Breast epithelium (tissue), 4 donors: ENCODE measurements at regions of chr7 and their contacts with region 1.

Region 1: DNA sequence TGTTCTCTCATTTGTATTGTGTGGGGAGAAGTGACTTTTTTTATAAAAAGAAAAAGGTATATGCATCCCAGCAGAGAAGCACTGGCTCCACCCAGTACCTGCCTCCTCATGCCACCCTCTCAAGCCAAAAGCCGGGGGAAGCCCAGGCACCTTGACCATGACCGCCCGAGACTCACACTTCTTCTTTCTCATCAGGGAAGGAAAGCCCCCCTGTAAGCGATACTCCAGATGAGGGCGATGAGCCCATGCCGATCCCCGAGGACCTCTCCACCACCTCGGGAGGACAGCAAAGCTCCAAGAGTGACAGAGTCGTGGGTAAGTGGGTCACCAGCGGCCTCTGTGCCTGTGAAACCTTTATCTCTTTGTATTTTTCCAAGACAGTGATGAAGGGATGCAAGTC is 22.9 kb downstream of the IKZF1 start:
- DNase-seq: no peak
- H3K4me3 ChIP-seq: no peak overlapping the region
- H3K27ac ChIP-seq: no peak overlapping the region
- H3K4me1 ChIP-seq: no peaks in the 10 kb centered on the region
- H3K27me3 ChIP-seq: no peaks in the 10 kb centered on the region
- CTCF ChIP-seq: no peak
- POLR2A ChIP-seq: no peak

Region 2: GRCh38 chr7:49433794-49434193 is 893.6 kb before region 1 on chr7:
- intact Hi-C with region 1: no loop called
- DNase-seq: no peak
- H3K4me3 ChIP-seq: no peak overlapping the region
- H3K27ac ChIP-seq: no peak overlapping the region
- H3K4me1 ChIP-seq: no peaks in the 10 kb centered on the region
- H3K27me3 ChIP-seq: no peaks in the 10 kb centered on the region
- CTCF ChIP-seq: no peak
- POLR2A ChIP-seq: no peak

Region 3: DNA sequence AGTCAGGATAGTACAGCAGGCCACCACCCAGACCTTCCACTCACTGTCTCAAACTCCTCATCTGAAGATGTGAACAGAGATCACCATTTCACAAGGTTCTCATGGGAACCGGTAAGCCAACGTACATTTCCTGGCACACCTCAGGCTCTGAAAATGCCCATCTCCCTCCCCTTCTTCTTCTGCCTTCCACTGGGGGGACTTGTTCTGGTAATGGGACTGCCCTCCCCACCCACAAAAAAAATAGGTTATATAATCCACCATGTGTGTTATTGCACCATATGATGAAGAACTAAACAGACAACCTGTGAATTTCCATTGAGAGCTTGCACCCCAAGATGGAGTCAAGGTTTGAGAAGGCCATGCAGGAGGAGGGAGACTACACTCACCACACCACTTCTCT is 65.0 kb before region 1 on chr7:
- intact Hi-C with region 1: no loop called
- DNase-seq: no peak
- H3K4me3 ChIP-seq: no peak overlapping the region
- H3K27ac ChIP-seq: no peak overlapping the region
- H3K4me1 ChIP-seq: no peaks in the 10 kb centered on the region
- H3K27me3 ChIP-seq: no peaks in the 10 kb centered on the region
- CTCF ChIP-seq: no peak
- POLR2A ChIP-seq: no peak

Region 4: DNA sequence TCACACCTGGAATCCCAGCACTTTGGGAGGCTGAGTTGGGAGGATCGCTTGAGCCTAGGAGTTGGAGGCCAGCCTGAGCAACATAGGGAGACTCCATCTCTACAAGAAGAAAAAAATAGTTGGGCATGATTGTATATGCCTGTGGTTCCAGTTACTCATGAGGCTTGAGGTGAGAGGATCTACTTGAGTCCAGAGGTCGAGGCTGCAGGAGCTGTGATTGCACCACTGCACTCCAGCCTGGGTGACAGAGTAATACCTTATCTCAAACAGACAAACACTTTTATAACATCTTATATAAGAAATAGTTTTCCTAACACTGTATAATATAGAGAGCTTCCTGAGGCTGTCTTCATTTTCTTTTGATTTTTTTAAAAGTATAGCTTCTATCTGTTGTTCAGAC is 1437.5 kb after region 1 on chr7:
- intact Hi-C with region 1: loop called (anchors 10 kb)
- DNase-seq: no peak
- H3K4me3 ChIP-seq: no peak overlapping the region
- H3K27ac ChIP-seq: no peak overlapping the region
- H3K4me1 ChIP-seq: no peaks in the 10 kb centered on the region
- H3K27me3 ChIP-seq: peaks cover 0 to 3% of the 10 kb centered on the region in 2 donors
- CTCF ChIP-seq: no peak
- POLR2A ChIP-seq: no peak